GM10248 (cell line): ENCODE measurements at regions of chr10 and their contacts with region 1.

Region 1: GRCh38 chr10:101214446-101215396 is 14.5 kb downstream of the LBX1 start:
- DNase-seq: peak; percentile 79
- CTCF ChIP-seq: peak; percentile 88

Region 2: DNA sequence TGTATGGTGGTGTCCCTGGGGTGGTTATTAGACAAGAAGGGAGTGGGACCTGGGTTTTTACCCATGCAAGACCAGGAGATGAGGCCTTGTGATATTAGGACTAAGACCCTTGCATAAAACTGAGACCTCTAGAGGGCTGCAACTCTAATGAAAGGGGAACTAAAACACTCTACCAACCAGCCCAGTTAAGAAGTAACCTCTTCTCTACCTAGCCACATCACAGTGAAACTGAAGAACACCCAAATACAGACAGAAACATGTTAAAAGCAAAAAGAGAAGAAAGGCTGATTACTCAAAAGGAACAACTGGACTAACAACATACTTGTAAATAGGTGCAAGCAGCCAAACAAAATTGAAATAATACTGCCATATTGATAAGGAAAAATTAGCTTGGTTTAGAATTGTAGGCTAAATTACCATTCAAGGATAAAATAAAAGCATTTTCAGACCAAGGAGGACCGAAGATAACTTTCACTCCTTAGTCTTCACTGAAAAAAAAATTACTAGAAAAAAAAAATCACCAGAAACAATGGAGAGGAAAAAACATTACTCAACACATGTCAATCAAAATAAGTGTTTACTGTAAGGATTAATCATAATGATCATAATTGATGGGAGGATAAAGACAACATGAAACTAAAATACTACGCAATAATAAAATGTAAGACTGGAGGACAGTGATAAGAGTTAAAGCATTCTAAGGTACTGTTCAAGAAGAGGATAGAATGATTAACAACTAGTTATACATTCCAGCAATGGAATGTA is 1056.5 kb before region 1 on chr10:
- CTCF ChIA-PET with region 1: no interaction called
- POLR2A ChIA-PET with region 1: no interaction called
- DNase-seq: peak; percentile 66
- CTCF ChIP-seq: no peak

Region 3: DNA sequence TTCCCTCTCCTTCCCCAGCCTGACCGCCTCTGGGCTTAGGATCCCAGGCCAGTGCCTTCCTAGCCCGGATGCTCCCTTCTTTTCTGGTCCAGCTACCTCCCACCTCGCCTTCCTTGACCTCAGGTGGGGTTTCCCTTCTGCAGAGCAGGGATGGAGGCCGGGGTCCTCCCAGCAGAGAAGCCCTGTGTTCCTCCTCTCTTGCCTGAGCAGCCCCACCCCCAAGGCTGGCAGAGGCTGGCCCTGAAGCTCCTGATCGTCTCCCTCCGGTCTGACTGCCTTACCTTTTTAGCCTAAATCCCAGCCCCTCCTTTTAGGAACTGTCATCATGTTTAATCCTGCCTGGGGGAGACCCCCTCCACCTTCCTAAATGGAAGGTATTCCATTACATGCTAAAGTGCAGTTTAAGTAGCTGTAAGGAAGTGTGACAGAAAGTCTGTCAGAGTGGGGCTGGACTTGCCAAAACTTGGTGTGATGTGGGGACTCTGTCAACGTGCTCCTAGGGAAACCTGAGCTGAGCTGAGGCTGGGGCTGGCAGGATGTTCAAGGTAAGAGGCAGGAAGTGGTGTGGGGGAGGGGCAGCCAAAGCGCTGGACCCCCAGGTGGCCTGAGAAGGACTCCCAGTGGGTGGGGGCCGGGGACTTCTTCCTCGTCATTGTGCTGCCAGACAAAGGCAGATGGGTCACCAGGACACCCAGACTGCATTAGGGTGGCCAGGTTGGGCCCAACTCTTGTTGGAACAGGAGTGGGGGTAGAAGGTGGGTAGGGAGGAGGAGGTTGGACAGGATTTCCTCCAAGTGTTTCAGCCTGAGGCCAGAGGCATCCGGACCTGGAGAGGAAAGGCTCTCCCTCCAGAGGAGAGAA is 24.9 kb before region 1 on chr10:
- CTCF ChIA-PET with region 1: interaction called, 15 read pairs
- POLR2A ChIA-PET with region 1: no interaction called
- DNase-seq: no peak
- CTCF ChIP-seq: no peak

Region 4: DNA sequence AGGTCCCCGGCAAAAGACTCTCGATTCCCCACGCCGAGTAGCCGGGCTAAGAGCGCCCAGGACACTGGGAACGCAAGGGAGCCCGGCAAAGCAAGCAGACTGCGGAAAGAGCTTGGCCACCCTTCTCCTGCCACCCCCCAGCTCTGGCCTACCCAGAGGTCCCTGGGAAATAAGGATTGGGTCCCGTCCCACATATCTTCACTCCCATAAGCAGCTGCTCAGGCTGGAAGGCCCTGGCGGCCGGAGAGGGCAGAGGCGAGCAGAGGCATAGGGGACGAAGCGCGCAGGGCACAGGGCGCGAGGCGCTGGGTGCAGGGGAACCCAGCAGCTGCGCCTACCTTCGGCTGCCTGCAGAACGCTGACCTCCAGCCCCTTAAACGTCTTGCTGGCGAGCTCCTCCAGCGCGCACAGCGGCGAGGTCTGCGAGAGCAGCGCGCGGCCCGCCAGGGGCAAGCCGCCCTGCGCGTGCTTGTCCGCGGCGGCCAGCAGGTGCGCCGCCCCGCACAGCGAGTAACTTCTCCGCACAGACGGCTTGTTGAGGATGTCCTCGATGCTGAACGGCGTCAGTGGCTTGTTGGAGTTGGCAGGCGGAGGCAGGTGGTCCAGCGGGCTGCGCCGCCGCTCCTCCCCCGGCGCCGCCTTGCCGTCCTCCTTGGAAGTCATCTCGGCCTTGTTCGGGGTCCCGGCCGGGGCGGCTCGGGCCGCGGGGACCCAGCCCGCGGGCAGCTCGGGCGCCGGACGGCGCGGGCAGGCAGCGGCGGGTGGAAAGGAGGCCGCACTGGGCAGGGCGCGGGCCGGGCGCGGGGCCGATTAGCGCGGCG is 13.6 kb after region 1 on chr10:
- CTCF ChIA-PET with region 1: interaction called, 17 read pairs
- POLR2A ChIA-PET with region 1: no interaction called
- DNase-seq: no peak
- CTCF ChIP-seq: no peak

Region 5: DNA sequence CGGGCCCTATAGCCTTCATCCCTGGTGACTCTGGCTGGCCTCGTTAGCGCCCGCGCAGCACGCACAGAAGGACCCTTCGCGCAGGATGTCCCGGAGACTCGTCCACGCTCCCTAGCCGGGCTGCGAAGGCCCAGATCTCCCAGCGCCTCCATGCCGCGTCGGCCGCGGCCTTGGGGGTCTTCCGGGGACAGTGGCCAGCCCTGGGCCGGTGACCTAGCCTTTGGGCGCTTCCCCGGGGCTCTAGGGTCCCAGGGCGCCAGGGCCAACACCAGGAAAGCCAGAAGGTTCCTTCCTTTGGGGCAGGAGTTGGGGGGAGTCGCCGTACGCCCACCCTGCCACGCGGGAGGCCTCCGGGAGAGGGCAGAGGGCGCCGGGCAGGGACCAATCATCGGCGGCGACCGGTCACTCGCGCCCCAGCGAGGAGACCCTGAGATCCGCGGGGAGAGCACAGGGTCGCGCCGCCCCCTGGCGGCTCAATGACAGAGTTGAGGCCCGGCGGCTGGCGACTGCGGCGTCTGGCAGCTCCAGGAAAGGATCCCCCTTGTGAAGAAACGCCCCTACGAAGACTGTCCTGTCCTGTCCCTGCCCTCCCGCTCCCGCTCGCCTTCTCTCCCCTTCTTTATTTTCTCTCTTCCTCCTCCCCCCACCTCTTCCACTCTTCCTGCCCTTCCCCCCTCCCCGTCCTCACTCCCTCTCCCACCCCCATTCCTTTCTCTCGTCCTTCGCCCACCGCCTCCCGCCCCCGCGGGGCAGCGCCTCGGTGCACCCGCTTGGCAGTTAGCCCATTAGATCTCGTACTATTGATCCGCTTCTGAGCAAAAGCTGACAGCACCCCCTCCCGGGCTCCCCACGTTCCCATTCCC is 76.8 kb after region 1 on chr10:
- CTCF ChIA-PET with region 1: interaction called, 51 read pairs
- POLR2A ChIA-PET with region 1: no interaction called
- DNase-seq: peak; percentile 78
- CTCF ChIP-seq: peak; percentile 51

Region 6: GRCh38 chr10:101397140-101397539 is 182.4 kb after region 1 on chr10:
- CTCF ChIA-PET with region 1: no interaction called
- POLR2A ChIA-PET with region 1: no interaction called
- DNase-seq: no peak
- CTCF ChIP-seq: no peak

Region 7: DNA sequence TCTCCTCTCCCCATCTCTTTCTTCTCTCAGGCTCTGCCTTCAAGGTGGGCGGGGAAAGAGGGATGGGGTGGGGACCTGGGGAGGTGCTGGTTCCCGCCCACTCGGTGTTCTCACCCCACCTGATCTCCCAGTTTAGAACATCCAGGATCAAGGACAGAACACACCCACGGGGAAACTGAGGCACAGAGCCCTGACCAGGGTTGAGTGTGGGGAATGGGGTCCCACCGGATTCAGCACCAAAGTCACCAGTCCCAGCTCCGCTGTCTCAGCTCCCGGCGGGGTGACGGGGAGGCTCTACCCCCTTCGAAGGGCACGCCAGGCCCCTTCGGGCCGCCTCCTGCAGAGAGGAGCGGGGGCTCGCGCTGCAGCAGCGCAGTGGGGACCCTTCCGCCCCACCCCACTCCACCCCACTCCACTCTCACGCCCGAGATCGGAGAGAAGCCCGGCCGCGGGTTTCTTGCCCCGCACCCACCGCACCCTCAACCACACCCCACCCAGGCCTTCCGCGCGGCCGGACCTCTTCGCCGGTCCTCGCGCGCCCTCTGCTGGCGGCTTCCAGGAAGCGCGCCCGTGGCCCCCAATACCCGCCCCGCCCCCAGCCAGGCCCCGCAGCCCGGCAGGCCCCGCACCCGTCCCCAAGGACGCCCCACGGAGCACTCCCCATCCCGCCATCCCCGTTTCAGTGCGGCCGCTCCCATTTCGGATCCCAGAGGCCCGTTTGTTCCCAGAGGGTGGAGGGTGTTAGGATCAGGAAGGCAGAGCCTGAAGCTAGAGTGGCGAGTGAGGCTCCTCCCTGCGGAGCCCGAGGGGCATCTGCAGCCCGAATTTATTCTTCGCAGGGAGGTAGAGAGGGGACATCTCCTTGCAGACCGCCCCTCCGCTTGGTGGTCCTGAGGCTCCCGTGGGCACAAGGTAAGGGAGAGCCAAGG is 355.4 kb after region 1 on chr10:
- CTCF ChIA-PET with region 1: interaction called, 103 read pairs
- POLR2A ChIA-PET with region 1: no interaction called
- DNase-seq: peak; percentile 92
- CTCF ChIP-seq: peak; percentile 83

Region 8: DNA sequence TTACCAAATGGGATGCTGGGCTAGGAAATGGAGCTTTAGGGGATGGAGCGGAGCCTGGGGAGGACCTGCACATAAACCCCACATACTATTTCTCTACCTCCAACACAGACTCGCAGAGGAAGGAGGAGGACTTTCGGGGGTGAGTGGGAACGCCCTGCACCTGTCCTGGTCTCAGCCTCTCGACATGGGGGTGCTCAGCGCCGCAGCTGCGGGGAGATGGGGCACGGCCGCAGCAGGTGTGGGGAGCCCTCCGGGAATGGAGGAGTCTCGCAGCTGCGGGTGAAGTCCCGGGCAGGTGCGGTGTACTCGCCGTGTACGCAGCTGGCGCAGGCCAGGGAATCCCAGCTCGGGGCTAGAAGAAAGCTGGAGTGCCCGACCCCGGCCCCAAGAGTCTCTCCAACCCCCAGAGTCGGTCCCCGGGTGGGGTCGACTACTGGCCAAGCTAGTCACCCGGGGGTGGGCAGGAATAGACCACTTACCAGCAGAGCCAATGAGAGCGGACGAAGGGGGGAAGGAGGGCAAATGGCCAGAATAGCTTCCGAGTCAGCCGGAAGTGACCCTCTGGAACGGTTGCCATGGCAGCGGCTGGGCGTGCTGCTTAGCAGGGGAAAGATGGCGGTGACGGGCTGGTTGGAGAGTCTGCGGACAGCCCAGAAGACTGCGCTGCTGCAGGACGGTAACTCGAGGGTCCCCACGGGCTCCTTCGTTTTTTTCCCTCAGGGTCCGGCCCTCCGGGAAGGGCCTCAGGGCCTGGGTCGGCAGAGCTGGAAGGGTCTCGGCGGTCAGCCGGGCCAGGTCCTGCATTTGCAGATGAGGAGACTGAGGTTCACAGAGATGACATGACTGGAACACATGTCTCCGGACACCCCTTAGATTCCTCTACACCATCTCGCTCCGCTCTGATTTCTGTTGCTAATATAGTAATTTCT is 373.3 kb after region 1 on chr10 and contains the starts of genes DPCD and POLL:
- CTCF ChIA-PET with region 1: interaction called, 13 read pairs
- POLR2A ChIA-PET with region 1: no interaction called
- DNase-seq: peak; percentile 98
- CTCF ChIP-seq: no peak

Region 9: GRCh38 chr10:101709359-101710058 is 494.8 kb after region 1 on chr10:
- CTCF ChIA-PET with region 1: no interaction called
- POLR2A ChIA-PET with region 1: no interaction called
- DNase-seq: no peak
- CTCF ChIP-seq: no peak

Region 10: DNA sequence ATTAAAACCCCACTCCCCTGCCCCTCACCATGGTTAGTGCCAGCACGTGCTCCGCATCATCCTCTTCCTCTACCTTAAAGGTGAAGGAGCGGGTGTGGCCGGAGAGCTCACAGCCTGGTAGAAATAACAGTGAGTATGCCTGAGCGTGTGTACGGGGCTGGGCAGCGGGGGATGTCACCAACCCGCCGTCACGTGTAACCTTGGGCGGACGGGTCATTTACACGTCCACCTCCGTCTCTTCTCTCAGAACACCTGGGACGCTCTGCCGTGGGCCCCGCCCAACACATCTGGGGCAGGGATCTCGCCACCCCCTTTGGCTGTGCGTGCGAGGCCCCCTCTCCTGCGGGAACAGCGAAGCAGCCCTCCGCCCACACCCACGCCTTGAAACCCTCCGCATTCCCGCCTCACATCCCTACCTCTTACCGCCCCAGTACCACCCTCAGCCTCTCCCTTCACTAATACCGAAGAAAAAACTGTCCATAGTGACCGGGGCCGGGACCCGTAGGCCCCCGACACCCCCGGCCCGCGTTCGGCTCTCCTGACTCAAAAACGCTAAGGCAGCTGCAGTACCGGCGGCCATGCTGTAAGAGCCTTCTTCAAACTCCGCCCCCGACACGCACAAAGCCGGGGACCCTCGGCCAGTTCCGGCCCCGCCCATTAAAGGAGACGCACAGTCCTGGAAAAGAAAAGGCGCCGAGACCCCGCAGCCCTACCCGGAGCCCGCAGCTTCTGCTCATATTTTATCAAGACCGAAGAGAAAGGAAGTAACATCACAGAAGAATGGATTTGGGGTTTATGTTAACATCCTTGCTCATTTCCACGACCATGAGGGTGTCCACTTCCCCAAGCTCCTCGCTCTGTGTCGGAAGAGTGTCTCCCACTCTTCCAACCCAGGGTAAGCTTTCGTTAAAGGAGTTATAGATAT is 568.4 kb after region 1 on chr10 and contains the start of gene NPM3:
- CTCF ChIA-PET with region 1: interaction called, 17 read pairs
- POLR2A ChIA-PET with region 1: no interaction called
- DNase-seq: peak; percentile 91
- CTCF ChIP-seq: no peak